ENCODE measurements at regions of chr6 and their contacts with region 1.

Region 1: GRCh38 chr6:54903884-54904283 is 57.3 kb downstream of the FAM83B start:
- DNase-seq: no peak
- H3K4me3 ChIP-seq: no peak overlapping the region
- H3K4me3 Mint-ChIP-seq: no peak overlapping the region
- H3K27ac ChIP-seq: no peak overlapping the region
- H3K27ac Mint-ChIP-seq: no peak overlapping the region
- H3K4me1 ChIP-seq: no peaks in the 10 kb centered on the region
- H3K4me1 Mint-ChIP-seq: no peaks in the 10 kb centered on the region
- H3K27me3 ChIP-seq: no peaks in the 10 kb centered on the region
- H3K27me3 Mint-ChIP-seq: peaks cover 0 to 4% (median 0%) of the 10 kb centered on the region in 3 donors
- CTCF ChIP-seq: no peak

Region 2: DNA sequence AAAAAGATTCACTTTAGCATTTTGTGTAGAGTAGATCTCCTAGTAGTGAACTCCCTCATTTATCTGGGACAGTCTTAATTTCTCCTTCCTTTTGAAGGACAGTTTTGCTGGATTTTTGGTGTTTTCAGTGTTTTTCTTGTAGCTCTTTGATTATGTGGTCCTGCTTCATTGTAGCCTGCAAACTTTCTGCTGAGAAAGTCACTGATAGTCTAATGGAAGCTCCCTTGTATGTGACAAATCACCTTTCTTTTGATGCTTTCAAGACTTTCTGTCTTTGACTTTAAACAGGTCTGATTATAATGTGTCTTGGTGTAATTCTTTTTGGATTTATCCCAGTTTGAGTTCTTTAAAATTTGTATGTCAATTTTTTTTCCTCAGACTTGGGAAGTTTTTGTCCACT is 28.7 kb after region 1 on chr6:
- intact Hi-C with region 1: loop called in 1 of 2 experiments (anchors 2 kb)
- DNase-seq: no peak
- H3K4me3 ChIP-seq: no peak overlapping the region
- H3K4me3 Mint-ChIP-seq: no peak overlapping the region
- H3K27ac ChIP-seq: no peak overlapping the region
- H3K27ac Mint-ChIP-seq: no peak overlapping the region
- H3K4me1 ChIP-seq: peaks cover 0 to 7% of the 10 kb centered on the region in 2 donors
- H3K4me1 Mint-ChIP-seq: no peaks in the 10 kb centered on the region
- H3K27me3 ChIP-seq: no peaks in the 10 kb centered on the region
- H3K27me3 Mint-ChIP-seq: peaks cover 0 to 2% (median 0%) of the 10 kb centered on the region in 3 donors
- CTCF ChIP-seq: no peak